Common myeloid progenitor, CD34-positive (primary cell): ENCODE measurements at regions of chr5 and their contacts with region 1.

Region 1: GRCh38 chr5:39424736-39425637 is at the start of gene DAB2:
- DNase-seq: peak; percentile 91 to 94 (median 93)
- H3K4me3 ChIP-seq: peak within 1 kb of the TSS; percentile 63 to 91 (median 80)
- H3K27ac ChIP-seq: peak within 1 kb of the TSS in 1 of 2 experiments; percentile 63
- H3K4me1 ChIP-seq: peaks cover 0 to 49% (median 31%) of the 10 kb centered on the region in 4 experiments
- H3K27me3 ChIP-seq: no peaks in the 10 kb centered on the region

Region 2: DNA sequence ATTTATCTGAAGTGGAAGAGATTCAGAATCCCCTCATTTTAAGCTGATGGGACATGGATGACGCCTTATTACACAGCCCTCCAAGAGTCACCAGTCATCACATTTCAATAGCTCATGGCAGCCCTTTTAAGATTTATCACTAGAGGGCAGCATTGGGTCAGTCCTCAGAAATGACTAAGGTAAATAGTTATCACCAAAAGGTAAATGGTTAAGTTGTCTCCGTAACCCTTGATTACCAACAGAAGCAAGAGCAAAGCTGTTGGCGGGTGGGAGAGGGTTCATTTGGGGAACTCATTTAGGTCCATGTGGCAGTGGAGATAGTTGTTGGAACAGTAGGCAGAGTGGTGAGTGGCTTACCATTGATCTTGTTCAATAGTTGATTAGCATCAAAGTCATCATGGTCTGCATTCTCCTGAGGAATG is 48.7 kb before region 1 on chr5:
- CTCF ChIA-PET with region 1: interaction called, 16 read pairs
- POLR2A ChIA-PET with region 1: no interaction called
- DNase-seq: peak; percentile 62 to 81 (median 73)
- H3K4me3 ChIP-seq: no peak overlapping the region
- H3K27ac ChIP-seq: no peak overlapping the region
- H3K4me1 ChIP-seq: no peaks in the 10 kb centered on the region
- H3K27me3 ChIP-seq: no peaks in the 10 kb centered on the region

Region 3: GRCh38 chr5:39399135-39400036 is 25.6 kb before region 1 on chr5:
- CTCF ChIA-PET with region 1: interaction called, 39 read pairs
- POLR2A ChIA-PET with region 1: interaction called, 7 read pairs
- DNase-seq: peak; percentile 74 to 92 (median 85)
- H3K4me3 ChIP-seq: peak overlapping the region in 4 of 7 experiments; percentile 5 to 48 (median 34)
- H3K27ac ChIP-seq: peak overlapping the region; percentile 30 to 74
- H3K4me1 ChIP-seq: peaks cover 15 to 38% (median 25%) of the 10 kb centered on the region in 4 experiments
- H3K27me3 ChIP-seq: no peaks in the 10 kb centered on the region

Region 4: DNA sequence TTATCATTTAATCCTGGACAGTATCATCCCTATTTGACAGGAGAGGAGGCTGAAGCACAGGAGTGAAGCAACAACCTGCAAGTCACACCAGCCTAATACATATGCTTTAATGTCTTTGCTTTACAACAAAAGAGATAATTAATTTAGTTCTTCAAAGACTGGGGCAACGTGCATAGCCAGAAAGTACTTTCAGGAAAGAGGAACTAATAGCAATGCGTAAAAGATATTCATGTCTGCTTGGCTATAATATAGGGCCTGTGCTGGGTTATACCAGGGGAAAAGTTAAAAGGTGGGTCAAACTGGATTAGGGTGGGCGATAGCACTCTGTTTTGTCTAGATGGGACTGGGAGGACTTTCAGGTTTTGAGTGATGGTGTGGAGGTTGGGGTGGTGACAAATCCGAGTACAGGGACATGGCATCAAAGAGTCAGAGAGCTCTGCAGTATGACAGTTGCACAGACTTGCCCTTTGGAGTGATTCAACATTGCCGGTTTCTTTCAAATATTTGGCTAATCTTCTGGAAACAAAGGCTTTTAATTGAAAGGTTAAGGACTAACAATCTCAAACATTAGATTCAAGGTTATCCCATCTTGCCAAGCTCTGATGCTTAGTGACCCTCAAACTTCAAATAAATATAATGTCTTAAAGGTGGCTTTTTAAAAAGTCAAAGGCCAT is 12.1 kb before region 1 on chr5:
- CTCF ChIA-PET with region 1: interaction called, 10 read pairs
- POLR2A ChIA-PET with region 1: no interaction called
- DNase-seq: peak in 2 of 3 donors; percentile 48 to 58
- H3K4me3 ChIP-seq: no peak overlapping the region
- H3K27ac ChIP-seq: no peak overlapping the region
- H3K4me1 ChIP-seq: peaks cover 0 to 14% (median 6%) of the 10 kb centered on the region in 4 experiments
- H3K27me3 ChIP-seq: no peaks in the 10 kb centered on the region